PC-9 (cell line): ENCODE measurements at regions of chr6 and their contacts with region 1.

Region 1: DNA sequence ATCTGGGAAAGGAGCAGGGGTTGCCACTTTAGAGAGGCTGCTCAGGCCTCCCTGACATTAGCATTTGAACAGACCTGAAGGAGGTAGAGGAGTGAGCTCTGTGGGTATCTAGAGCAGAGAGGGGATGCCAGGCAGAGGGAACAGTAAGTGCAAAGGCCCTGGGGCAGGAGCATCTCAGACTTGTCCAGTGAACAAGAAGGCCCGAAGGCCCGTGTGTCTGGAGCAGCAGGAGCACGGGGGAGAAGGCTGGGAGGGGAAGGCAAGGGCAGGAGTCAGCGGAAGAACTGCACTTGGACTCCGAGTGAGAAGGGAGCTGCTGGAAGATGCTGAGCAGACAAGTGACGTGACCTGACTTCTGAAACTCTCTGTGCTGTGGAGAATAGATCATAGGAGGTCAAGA is 15.4 kb downstream of the ETV7 start:
- DNase-seq: no peak
- H3K4me3 ChIP-seq: no peak overlapping the region
- H3K27ac ChIP-seq: no peak overlapping the region
- H3K4me1 ChIP-seq: peaks cover 26% of the 10 kb centered on the region
- H3K27me3 ChIP-seq: no peaks in the 10 kb centered on the region
- CTCF ChIP-seq: no peak

Region 2: GRCh38 chr6:35496841-35497570 is 875.1 kb before region 1 on chr6 and contains the start of gene TEAD3:
- CTCF ChIA-PET with region 1: no interaction called
- POLR2A ChIA-PET with region 1: interaction called, 21 read pairs
- intact Hi-C with region 1: no loop called
- DNase-seq: peak; percentile 51 to 91
- H3K4me3 ChIP-seq: peak within 1 kb of the TSS; percentile 94
- H3K27ac ChIP-seq: peak within 1 kb of the TSS; percentile 88
- H3K4me1 ChIP-seq: peaks cover 30% of the 10 kb centered on the region
- H3K27me3 ChIP-seq: no peaks in the 10 kb centered on the region
- CTCF ChIP-seq: no peak
- total RNA-seq, gene TEAD3: 33.1 and 40.1 TPM in 2 replicates